HEK293 (cell line): ENCODE measurements at regions of chr12 and their contacts with region 1.

Region 1: GRCh38 chr12:115916910-115917668 is 360.4 kb downstream of the MED13L start:
- H3K4me3 ChIP-seq: peak overlapping the region; percentile 15
- H3K27ac ChIP-seq: no peak overlapping the region
- H3K4me1 ChIP-seq: no peaks in the 10 kb centered on the region
- CTCF ChIP-seq: peak; percentile 93

Region 2: GRCh38 chr12:114625294-114625851 is 1291.7 kb before region 1 on chr12:
- CTCF ChIA-PET with region 1: interaction called, 13 read pairs
- POLR2A ChIA-PET with region 1: no interaction called
- H3K4me3 ChIP-seq: no peak overlapping the region
- H3K27ac ChIP-seq: no peak overlapping the region
- H3K4me1 ChIP-seq: no peaks in the 10 kb centered on the region; the same call in 1 of the 2 replicates
- CTCF ChIP-seq: peak; percentile 75

Region 3: DNA sequence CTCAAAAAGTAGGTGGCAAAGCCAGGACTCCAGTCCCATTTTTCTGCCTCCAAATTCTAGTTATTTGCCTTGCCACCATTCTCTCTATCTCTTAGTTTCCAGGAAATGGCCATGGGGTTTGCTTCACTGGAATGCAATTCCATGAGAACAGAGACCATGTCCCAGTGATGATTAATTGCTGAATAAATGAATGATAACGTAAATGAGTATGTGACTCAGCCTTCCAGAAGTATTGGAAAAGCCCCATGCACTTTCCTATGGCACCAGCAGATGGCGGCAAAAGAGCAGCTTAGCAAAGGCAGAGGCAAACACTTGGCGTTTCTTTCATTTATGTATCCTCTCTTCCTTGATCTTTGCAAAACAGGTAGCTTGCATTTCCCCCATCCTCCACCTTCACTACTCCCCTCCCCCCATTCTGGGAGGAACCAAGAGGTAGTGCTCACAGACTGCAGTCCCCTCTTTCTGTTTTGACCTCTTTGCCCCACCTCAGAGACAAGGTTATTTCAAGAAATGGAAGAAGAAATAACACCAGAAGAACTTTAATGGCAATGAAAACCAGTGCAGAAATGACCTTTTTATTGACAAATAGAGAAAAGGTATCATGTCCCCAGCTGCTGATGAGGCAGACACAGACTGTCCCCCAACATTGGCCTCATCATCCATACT is 1254.4 kb before region 1 on chr12:
- CTCF ChIA-PET with region 1: interaction called, 11 read pairs
- POLR2A ChIA-PET with region 1: no interaction called
- H3K4me3 ChIP-seq: no peak overlapping the region
- H3K27ac ChIP-seq: no peak overlapping the region
- H3K4me1 ChIP-seq: peaks cover 6% of the 10 kb centered on the region
- CTCF ChIP-seq: peak; percentile 81

Region 4: DNA sequence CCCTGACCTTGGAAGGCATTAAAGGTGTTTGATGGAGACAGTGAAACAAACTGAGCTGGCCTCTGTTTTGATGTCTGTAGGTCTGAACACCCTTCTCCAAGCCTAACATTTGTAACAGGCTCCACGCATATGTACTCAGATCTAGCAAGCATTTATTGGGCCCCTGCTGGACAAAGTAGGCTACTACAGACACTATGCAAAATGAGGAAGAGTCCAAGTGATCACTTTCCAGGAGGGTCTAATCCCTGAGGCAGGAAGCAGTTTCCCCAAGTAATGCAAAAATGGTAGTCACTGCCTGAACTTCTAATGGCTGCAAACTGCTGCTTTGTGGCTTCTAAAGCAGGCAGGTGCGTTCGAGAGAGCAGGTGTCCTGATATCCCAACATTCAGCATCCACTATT is 45.4 kb before region 1 on chr12:
- CTCF ChIA-PET with region 1: interaction called, 15 read pairs
- POLR2A ChIA-PET with region 1: no interaction called
- H3K4me3 ChIP-seq: no peak overlapping the region
- H3K27ac ChIP-seq: no peak overlapping the region
- H3K4me1 ChIP-seq: no peaks in the 10 kb centered on the region
- CTCF ChIP-seq: peak; percentile 47; the same call in 1 of the 2 replicates

Region 5: DNA sequence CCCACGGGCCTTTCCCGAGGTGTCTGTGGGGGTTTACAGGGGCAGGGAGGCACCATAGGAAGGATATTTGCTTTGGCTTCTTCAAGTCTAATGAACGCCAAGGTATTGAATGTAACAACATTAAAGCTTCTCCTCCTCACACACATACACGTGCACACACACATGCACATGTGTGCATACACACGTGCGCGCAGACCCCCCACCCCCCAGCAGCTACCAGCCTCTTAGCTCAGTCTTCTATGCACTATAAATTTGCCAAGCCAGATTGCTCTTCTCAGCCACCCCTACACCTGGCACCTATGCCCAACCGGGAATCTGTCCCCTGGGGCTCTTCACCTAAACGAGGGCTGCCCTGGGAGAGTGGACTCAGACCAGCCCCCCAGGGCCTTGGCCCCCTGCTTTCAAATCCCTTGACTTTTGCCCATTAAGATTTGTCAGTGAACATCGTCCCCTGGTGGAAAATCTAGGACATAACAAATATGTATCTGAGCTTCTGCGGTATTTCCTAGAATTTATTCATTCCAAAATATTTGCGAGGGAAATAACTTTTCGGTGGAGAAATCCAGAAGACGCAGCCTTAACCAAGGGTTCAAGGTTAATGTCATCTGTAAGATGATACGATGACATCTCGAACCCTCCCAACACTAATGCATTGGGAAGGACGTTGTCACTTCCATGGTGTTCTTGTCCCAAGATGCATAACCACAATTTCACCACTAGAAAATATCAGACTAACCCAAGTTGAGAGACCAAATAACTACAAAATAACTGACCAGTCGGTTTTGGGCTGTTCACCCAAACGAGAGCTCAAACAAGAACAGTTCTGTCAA is 30.0 kb after region 1 on chr12:
- CTCF ChIA-PET with region 1: interaction called, 10 read pairs
- POLR2A ChIA-PET with region 1: no interaction called
- H3K4me3 ChIP-seq: no peak overlapping the region
- H3K27ac ChIP-seq: no peak overlapping the region
- H3K4me1 ChIP-seq: no peaks in the 10 kb centered on the region
- CTCF ChIP-seq: no peak

Region 6: GRCh38 chr12:115964626-115965025 is 47.5 kb after region 1 on chr12:
- CTCF ChIA-PET with region 1: no interaction called
- POLR2A ChIA-PET with region 1: no interaction called
- H3K4me3 ChIP-seq: no peak overlapping the region
- H3K27ac ChIP-seq: no peak overlapping the region
- H3K4me1 ChIP-seq: no peaks in the 10 kb centered on the region
- CTCF ChIP-seq: no peak

Region 7: DNA sequence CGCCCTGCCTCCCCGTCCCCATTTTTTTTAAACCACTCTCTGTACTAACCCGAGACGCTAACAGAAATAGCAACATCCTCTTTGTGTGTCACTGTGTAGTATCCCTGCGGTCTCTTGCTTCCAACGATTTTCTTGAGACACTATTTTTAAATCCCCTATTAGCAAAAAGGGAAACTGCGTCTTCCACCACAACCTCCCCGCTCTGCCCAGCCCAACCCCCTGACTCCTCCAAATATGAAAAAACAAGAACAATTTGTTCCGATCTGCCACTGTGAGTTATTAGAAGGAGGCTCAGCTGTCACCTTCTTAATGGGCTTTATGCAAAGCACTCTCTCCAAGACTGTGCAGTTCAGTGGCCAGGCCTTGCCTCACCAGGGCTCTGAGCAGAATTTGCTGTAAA is 718.4 kb after region 1 on chr12:
- CTCF ChIA-PET with region 1: no interaction called
- POLR2A ChIA-PET with region 1: no interaction called
- H3K4me3 ChIP-seq: no peak overlapping the region
- H3K27ac ChIP-seq: no peak overlapping the region
- H3K4me1 ChIP-seq: no peaks in the 10 kb centered on the region
- CTCF ChIP-seq: no peak